ENCODE measurements at regions of chr16 and their contacts with region 1.

Region 1: DNA sequence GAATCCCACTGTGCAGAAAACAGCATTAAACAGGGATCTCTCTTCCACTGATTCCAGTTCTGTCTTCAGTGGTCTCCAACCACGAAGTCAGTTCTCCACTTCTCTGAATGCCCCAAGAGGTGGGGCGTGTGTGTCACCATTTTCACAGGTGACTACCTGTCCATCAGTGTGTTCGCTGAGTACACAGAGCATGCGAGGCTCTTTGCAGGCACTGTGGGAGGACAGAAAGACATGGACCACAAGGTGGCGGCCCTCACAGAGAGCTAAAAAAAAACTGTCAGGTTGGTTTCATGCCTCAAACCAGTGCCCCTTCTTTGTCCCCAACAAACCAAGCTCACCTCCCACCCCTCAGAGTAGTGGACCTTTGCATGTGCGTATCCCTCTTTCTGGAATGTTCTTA is 13.8 kb downstream of the EMP2 start:
- DNase-seq: no peak
- H3K4me3 ChIP-seq: no peak overlapping the region
- H3K27ac ChIP-seq: no peak overlapping the region
- H3K4me1 ChIP-seq: peaks cover 0 to 4% (median 0%) of the 10 kb centered on the region in 4 experiments; a peak in 1 of 7 replicates
- H3K27me3 ChIP-seq: no peaks in the 10 kb centered on the region
- CTCF ChIP-seq: peak; percentile 33 to 45 (median 39); a peak in 3 of 4 replicates
- EP300 ChIP-seq: no peak
- POLR2A ChIP-seq: no peak
- RAD21 ChIP-seq: peak; percentile 36 to 52; a peak in 3 of 4 replicates

Region 2: DNA sequence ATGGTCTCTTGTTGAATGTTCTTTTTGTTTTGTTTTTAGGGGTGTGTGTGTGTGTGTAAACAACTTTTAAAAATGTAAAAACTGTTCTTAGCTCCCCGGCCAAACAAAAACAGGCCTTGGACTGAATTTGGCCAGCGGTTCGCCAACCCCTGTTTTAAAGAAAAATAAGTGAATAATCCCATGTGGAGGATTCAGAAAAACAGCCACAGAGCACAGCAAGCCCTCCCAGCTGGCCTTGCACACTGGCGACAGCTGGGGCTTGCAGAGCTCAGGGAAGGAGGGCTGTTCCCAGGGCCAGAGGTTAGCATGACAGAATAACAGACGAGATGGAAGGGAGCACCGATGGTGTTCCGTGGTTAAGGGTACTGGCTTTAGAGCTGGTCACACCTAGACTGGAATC is 25.2 kb before region 1 on chr16:
- CTCF ChIA-PET with region 1: interaction called, 10 read pairs
- POLR2A ChIA-PET with region 1: no interaction called
- DNase-seq: no peak
- H3K4me3 ChIP-seq: no peak overlapping the region
- H3K27ac ChIP-seq: no peak overlapping the region
- H3K4me1 ChIP-seq: no peaks in the 10 kb centered on the region
- H3K27me3 ChIP-seq: no peaks in the 10 kb centered on the region
- CTCF ChIP-seq: no peak
- EP300 ChIP-seq: no peak
- POLR2A ChIP-seq: no peak
- RAD21 ChIP-seq: no peak

Region 3: DNA sequence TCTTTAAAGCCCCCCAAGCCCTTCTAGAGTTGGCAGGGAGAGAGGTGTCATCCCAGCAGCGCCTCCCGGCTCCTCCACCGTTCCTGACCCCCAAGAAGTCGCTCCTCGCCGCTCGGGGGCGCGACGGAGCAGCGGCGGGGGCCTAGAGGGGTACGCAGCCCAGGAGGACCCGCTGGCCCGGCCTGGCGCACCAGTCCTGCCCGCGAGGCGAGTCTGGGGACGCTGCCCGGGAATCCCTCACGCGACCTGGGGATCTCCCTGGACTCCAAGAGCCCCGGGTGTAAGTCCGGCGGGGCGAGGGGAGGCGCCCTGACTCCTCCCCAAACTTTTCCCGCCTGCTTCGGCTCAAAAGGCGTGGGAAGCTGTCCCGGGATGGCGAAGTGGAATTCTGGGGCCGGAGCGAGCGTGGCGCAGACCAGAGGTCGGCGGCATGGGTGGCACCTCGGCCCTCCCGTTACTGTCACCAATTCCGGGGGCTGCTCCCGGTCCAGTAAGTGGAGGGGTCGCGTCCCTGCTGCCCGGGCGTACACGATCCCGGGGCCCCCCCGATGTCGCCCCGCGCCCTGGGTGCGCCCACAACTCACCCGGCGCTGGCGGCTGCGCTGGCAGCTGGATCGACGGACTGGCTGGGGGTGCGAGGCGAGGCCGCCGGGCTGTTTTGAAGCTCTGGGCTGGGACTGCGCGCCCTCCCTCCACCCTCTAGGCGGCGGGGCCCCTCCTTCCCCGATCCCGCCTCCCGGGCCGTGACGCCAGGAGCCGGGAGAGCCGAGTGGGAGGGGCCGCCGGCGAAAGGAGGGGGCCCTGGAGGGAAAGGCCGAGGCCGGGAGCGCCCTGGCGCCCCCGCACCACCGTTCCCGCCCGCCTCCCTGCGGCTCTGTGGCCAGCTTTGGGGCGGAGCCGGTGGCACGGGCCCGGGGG is 13.6 kb after region 1 on chr16 and contains the start of gene EMP2:
- CTCF ChIA-PET with region 1: interaction called, 12 read pairs
- POLR2A ChIA-PET with region 1: interaction called, 3 read pairs
- DNase-seq: peak; percentile 31 to 90
- H3K4me3 ChIP-seq: peak within 1 kb of the TSS; percentile 41 to 85 (median 62)
- H3K27ac ChIP-seq: peak within 1 kb of the TSS; percentile 33; the same call in 1 of the 2 replicates
- H3K4me1 ChIP-seq: peaks cover 15 to 39% (median 22%) of the 10 kb centered on the region in 4 experiments
- H3K27me3 ChIP-seq: no peaks in the 10 kb centered on the region
- CTCF ChIP-seq: peak; percentile 77 to 80 (median 79)
- EP300 ChIP-seq: 0 out of 3 replicates have a peak, but pooled peaks of 1 of the 2 experiments have one; percentile 49
- POLR2A ChIP-seq: peak in 1 of 2 experiments; percentile 51; a peak in 1 of 3 replicates
- RAD21 ChIP-seq: peak; percentile 63 to 75
- total RNA-seq, gene EMP2: 21.8 and 22.6 TPM in 2 replicates

Region 4: DNA sequence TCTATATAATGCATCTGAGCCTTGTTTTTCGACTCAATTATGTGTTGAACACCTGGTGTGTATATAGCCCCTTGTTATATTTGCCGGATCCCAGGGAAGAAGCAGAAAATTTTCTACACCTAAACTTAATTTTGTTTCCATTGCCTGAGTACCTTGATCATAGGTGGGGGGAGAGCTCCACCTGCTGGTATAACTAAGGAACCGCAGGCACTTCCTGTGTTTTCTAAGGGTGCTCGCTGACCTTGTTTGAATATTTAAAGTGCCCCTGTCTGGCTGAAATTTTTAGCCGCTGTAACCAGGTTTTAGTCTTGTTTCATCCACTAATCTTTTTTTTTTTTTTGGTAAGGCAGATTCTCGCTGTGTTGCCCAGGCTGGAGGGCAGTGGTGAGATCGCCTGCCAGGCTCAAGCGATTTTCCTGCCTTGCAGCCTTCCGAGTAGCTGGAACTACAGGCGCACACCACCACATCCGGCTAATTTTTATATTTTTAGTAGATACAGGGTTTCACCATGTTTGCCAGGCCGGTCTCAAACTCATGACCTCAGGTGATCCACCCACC is 170.6 kb after region 1 on chr16:
- CTCF ChIA-PET with region 1: interaction called, 12 read pairs
- POLR2A ChIA-PET with region 1: no interaction called
- DNase-seq: peak; percentile 29 to 68
- H3K4me3 ChIP-seq: no peak overlapping the region
- H3K27ac ChIP-seq: no peak overlapping the region
- H3K4me1 ChIP-seq: no peaks in the 10 kb centered on the region; a peak in 1 of 7 replicates
- H3K27me3 ChIP-seq: no peaks in the 10 kb centered on the region
- CTCF ChIP-seq: peak; percentile 44 to 85 (median 81)
- EP300 ChIP-seq: no peak
- POLR2A ChIP-seq: no peak
- RAD21 ChIP-seq: peak; percentile 95

Measured in H1 (cell line).